HEK293 (cell line): ENCODE measurements at regions of chr6 and their contacts with region 1.

Region 1: DNA sequence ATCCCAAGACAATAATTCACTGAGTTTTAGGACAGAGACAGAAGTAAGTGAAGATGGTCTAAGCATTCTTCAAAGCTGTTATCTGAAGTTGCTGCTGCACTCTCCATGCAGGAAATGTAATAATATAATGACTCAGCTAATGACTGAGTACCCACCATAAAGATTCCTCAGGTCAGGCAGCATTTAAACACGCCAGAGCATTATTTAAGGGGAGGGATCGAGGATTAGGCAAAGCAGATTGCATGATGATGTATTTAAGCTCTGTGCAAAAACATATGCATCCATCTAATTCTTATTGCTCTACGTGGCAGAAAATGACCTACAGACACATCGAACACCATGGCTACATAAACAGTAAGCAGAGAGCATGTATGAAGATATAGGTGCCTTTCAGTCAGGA is 216.4 kb downstream of the UNC5CL start:
- H3K4me3 ChIP-seq: no peak overlapping the region
- H3K27ac ChIP-seq: no peak overlapping the region
- H3K4me1 ChIP-seq: no peaks in the 10 kb centered on the region
- CTCF ChIP-seq: no peak

Region 2: DNA sequence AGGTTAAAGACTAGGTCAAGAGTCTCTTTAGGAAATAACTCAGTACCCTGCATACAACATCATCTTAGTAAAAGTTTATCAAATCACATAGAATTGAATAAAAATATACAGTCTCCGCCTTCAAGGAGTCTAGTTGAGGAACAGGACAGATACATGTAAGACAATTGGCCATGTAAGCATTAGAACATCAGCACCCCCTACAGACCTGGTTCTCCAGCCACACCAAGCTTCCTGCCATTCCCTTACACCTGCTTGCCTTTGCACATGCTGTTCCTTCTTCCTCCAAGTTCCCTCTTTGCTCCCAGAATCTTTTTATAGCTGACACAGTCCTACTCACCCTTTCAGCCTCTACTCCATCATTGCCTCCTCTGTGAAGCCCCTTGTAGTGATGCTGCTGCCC is 47.7 kb before region 1 on chr6:
- CTCF ChIA-PET with region 1: no interaction called
- POLR2A ChIA-PET with region 1: no interaction called
- H3K4me3 ChIP-seq: no peak overlapping the region
- H3K27ac ChIP-seq: no peak overlapping the region
- H3K4me1 ChIP-seq: no peaks in the 10 kb centered on the region
- CTCF ChIP-seq: no peak

Region 3: DNA sequence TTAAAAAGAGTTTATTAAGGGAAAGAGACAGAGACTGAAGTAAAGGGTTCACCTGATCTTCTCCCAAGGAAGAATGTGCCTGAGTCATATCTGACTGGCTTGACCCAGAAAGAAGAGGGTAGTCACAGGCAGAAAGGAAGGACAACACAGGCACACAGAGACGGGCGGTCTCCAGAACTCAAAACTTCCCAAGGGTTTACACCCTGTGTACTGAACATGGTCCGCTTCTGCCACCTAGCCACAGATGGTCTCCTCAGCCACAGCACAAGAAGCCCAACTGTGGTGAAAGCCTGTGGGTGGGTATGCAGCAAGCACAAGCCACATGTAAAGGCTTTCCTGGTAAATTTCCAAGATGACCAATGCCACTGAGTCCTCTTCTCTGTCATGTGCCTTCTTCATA is 199.2 kb after region 1 on chr6:
- CTCF ChIA-PET with region 1: interaction called, 10 read pairs
- POLR2A ChIA-PET with region 1: no interaction called
- H3K4me3 ChIP-seq: no peak overlapping the region
- H3K27ac ChIP-seq: peak overlapping the region; percentile 38; the same call in 1 of the 2 replicates
- H3K4me1 ChIP-seq: peaks cover 18% of the 10 kb centered on the region
- CTCF ChIP-seq: peak; percentile 71

Region 4: DNA sequence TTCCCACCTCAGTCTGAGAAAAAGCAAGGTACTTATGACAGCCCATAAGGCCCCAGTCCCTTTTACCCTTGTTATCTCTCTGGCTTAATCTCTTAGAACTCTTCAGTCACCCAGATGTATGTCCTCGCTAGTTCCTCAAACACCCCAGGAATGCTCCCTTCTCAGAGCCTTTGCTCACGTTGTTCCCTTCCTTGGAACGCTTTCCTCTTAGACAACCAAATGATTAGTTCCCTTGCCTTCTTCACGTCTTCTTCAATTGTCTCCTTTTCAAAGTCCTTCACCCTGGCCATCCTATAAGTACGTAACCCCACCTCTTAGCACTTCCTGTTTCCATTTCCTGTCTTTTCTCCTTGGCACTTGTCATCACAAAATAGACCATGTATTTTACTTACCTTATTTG is 229.3 kb after region 1 on chr6:
- CTCF ChIA-PET with region 1: no interaction called
- POLR2A ChIA-PET with region 1: no interaction called
- H3K4me3 ChIP-seq: no peak overlapping the region
- H3K27ac ChIP-seq: no peak overlapping the region
- H3K4me1 ChIP-seq: no peaks in the 10 kb centered on the region
- CTCF ChIP-seq: no peak